A549 (cell line): ENCODE measurements at regions of chr6 and their contacts with region 1.

Region 1: GRCh38 chr6:30821862-30822782 is 62.2 kb upstream of the DDR1 start:
- DNase-seq: peak; percentile 44 to 48
- ATAC-seq: peak; percentile 46 to 61; a peak in 3 of 6 replicates
- H3K4me3 ChIP-seq: no peak overlapping the region
- H3K27ac ChIP-seq: peak overlapping the region; percentile 81 to 90
- H3K4me1 ChIP-seq: peaks cover 62% of the 10 kb centered on the region
- CTCF ChIP-seq: peak; percentile 54
- EP300 ChIP-seq: no peak
- POLR2A ChIP-seq: no peak
- RAD21 ChIP-seq: peak; percentile 35 to 43; a peak in 2 of 5 replicates

Region 2: DNA sequence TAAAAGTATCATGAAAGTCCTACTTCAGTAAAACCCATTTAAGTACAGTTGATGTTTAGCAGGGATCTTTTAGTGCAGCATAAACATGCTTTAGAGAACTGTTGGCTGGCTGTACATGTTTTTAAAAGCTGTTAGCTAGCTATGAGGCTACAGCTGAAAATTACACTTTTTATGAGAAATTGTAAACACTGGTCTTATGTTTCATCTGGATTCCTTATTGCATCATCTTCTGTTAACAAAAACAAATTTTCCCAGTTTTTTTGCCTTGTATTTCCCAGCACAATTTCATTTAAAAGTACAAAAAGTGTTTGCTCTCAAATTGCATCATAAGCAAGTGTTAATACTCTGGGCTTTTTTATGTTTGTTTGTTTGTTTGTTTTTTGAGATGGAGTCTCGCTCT is 351.2 kb before region 1 on chr6:
- CTCF ChIA-PET with region 1: no interaction called
- POLR2A ChIA-PET with region 1: no interaction called
- DNase-seq: no peak
- ATAC-seq: no peak
- H3K4me3 ChIP-seq: no peak overlapping the region
- H3K27ac ChIP-seq: no peak overlapping the region
- H3K4me1 ChIP-seq: peaks cover 6% of the 10 kb centered on the region; the same call in 1 of the 3 replicates
- CTCF ChIP-seq: no peak
- EP300 ChIP-seq: no peak
- POLR2A ChIP-seq: no peak
- RAD21 ChIP-seq: no peak

Region 3: GRCh38 chr6:30533460-30534294 is 288.4 kb before region 1 on chr6:
- CTCF ChIA-PET with region 1: no interaction called
- POLR2A ChIA-PET with region 1: no interaction called
- DNase-seq: no peak
- ATAC-seq: no peak
- H3K4me3 ChIP-seq: no peak overlapping the region
- H3K27ac ChIP-seq: no peak overlapping the region
- H3K4me1 ChIP-seq: no peaks in the 10 kb centered on the region
- CTCF ChIP-seq: no peak
- EP300 ChIP-seq: no peak
- POLR2A ChIP-seq: no peak
- RAD21 ChIP-seq: no peak

Region 4: DNA sequence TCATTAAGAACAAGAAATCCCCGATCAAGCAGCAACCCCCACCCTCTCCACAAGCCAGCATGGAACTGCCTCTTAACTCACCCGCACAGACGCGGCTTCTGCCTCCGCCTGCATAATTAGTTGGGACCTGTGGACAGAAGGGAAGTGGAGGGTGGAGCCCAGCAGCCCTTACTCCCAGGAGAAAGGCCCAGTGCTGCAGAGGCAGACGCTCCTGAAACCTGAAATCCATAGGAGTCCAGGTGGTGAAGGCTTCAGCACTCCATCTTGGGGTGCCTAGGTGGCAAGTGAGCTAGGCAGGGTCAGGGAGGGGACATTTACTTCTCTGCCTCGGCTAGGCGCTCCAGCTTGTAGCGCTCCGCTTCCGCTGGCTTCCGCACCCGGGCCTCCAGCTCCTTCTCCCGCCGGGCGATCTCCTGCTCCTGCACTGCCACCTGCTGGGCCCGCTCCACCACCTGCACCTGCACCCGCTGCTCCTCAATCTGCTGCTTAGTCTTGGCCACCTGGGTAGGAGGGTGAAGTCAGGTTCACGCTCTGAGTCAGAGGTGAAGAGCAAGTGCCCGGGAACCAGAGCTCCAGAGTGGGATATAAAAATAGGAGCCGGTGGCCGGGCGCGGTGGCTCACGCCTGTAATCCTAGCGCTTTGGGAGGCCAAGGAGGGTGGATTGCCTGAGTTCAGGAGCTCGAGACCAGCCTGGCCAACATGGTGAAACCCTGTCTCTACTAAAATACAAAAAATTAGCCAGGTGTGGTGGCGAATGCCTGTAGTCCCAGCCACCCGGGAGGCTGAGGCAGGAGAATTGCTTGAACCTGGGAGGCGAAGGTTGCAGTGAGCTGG is 91.3 kb before region 1 on chr6:
- CTCF ChIA-PET with region 1: interaction called, 32 read pairs
- POLR2A ChIA-PET with region 1: interaction called, 3 read pairs
- DNase-seq: peak in 1 of 2 experiments; percentile 74
- ATAC-seq: peak; percentile 63 to 65
- H3K4me3 ChIP-seq: no peak overlapping the region
- H3K27ac ChIP-seq: peak overlapping the region in 1 of 2 experiments; percentile 64; a peak in 3 of 6 replicates
- H3K4me1 ChIP-seq: peaks cover 28% of the 10 kb centered on the region; the same call in 2 of the 3 replicates
- CTCF ChIP-seq: peak; percentile 47; the same call in 2 of the 3 replicates
- EP300 ChIP-seq: no peak
- POLR2A ChIP-seq: no peak
- RAD21 ChIP-seq: peak; percentile 67 to 70

Region 5: DNA sequence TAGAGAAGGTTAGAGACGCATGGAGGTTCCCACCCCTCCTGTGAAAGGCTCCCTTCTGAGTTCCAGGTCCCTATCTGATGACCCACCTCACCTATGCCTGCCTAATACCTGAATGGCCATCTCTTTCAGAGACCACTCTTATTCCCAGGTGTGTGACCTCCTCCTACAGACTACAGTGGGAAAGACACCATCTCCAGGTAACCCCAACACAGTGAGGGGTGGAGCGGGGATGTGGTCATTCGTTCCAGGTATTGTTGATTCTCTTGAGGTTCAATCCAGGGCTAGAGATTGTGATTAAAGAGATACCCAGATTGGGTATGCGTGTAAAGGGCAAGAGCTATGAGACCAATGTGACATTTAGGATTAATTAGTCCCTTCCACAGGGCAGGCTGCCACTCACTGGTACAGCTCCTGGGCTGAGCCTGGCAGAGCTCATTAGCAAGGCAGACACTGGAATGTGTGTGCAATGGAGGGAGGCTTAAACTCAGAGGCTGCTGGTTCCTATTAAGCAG is 31.3 kb before region 1 on chr6:
- CTCF ChIA-PET with region 1: interaction called, 16 read pairs
- POLR2A ChIA-PET with region 1: no interaction called
- DNase-seq: no peak
- ATAC-seq: no peak; a peak in 1 of 6 replicates
- H3K4me3 ChIP-seq: no peak overlapping the region
- H3K27ac ChIP-seq: peak overlapping the region; percentile 2 to 97; a peak in 2 of 6 replicates
- H3K4me1 ChIP-seq: peaks cover 16% of the 10 kb centered on the region
- CTCF ChIP-seq: no peak
- EP300 ChIP-seq: no peak
- POLR2A ChIP-seq: no peak
- RAD21 ChIP-seq: no peak

Region 6: GRCh38 chr6:31143148-31143547 is 321.0 kb after region 1 on chr6:
- CTCF ChIA-PET with region 1: no interaction called
- POLR2A ChIA-PET with region 1: no interaction called
- DNase-seq: no peak
- ATAC-seq: peak in 1 of 2 experiments; percentile 25; a peak in 2 of 6 replicates
- H3K4me3 ChIP-seq: no peak overlapping the region
- H3K27ac ChIP-seq: no peak overlapping the region
- H3K4me1 ChIP-seq: peaks cover 7% of the 10 kb centered on the region; the same call in 2 of the 3 replicates
- CTCF ChIP-seq: no peak
- EP300 ChIP-seq: no peak
- POLR2A ChIP-seq: no peak
- RAD21 ChIP-seq: no peak